ENCODE measurements at regions of chr14 and their contacts with region 1.

Region 1: DNA sequence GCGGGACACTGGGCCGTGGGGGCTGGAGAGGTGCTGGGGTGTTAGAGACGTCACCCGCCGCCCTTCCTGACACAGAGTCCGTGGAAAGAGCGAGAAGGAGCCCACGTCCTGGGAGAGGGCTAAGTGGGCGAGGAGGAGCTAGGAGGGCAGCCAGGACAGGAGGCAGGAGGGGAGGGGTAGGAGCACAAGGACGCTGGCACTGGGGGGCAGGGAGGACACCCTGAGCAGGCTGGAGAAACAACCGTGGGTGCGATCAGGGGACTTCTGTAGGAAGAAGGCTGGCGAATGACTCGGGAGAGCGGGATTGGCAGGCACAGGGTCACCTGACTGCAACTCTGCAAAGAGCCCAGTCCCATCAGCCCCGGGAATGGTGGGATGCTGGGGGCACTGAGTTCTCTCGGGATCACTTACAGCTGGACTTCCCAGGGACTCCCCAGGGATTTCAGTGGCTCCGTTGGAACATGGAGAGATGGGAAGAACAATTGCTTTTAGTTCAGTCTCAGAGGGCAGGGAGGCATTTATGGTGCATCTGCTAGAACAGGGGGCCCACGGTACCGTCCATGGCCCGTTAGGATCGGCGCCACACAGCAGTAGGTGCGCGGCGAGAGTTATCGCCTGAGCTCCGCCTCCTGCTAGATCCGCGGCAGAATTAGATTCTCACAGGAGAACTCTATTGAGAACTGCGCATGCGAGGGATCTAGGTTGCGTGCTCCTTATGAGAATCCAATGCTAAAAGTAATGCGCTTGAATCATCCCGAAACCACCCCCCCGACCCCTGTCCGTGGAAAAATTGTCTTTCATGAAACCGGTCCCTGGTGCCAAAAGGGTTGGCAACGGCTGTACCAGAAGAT is 24.3 kb downstream of the UBR7 start:
- DNase-seq: no peak
- H3K4me3 Mint-ChIP-seq: peak overlapping the region; percentile 67
- H3K27ac Mint-ChIP-seq: no peak overlapping the region
- H3K4me1 Mint-ChIP-seq: peaks cover 15% of the 10 kb centered on the region
- H3K27me3 Mint-ChIP-seq: peaks cover 9% of the 10 kb centered on the region

Region 2: GRCh38 chr14:93245764-93246420 is 14.5 kb after region 1 on chr14:
- CTCF ChIA-PET with region 1: no interaction called
- intact Hi-C with region 1: no loop called
- DNase-seq: no peak
- H3K4me3 Mint-ChIP-seq: no peak overlapping the region
- H3K27ac Mint-ChIP-seq: no peak overlapping the region
- H3K4me1 Mint-ChIP-seq: no peaks in the 10 kb centered on the region
- H3K27me3 Mint-ChIP-seq: no peaks in the 10 kb centered on the region

Region 3: DNA sequence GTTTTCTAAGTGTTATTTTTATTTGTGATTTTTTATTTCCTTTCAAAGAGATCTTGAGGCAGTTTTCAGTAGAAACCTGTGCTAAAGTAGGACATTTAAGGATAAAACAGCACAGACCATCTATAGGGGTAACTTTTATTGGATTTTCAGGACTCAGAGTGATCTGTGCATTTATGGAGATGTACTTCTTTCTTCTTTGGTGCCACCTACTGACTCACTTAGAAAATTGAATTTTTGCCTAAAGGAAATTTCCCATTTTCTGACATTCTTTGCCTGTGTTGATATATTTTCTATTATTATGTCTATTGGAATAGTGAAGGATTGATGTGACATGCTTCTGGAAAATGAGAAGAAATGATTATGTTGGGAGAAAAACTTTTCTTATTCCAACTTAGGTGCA is 312.4 kb after region 1 on chr14:
- CTCF ChIA-PET with region 1: no interaction called
- intact Hi-C with region 1: loop called (anchors 2 kb)
- DNase-seq: no peak
- H3K4me3 Mint-ChIP-seq: no peak overlapping the region
- H3K27ac Mint-ChIP-seq: no peak overlapping the region
- H3K4me1 Mint-ChIP-seq: no peaks in the 10 kb centered on the region
- H3K27me3 Mint-ChIP-seq: peaks cover 15% of the 10 kb centered on the region

Region 4: DNA sequence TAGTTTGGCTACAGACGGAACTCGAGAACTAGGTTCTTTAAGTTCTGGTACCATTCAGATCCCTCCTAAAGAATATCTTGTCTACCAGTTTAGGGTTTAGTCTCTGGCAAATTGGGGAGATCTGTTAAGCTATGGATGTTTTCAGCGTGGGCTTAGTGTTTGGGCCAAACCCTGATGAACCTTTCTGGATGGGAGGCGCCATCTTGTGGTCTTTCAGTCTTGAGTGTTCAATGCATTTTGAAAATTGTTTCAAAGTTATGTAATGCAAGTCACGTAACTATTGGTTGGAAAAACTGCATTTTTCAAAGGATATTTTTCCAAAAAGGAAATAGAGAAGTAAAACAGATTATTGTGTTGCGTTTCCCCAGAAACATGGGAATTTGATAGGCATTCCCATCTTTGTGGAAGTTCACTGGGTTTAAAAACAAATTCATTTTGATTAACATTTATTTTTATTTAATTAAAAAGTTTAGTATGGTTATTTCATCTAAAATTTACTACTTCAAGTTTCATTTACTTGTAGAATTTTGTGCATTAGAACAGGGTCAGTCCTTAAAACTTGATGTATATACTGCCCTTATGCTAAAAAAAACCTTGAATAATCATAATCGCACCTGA is 387.9 kb after region 1 on chr14:
- CTCF ChIA-PET with region 1: no interaction called
- intact Hi-C with region 1: loop called (anchors 2 kb)
- DNase-seq: peak; percentile 63
- H3K4me3 Mint-ChIP-seq: no peak overlapping the region
- H3K27ac Mint-ChIP-seq: no peak overlapping the region
- H3K4me1 Mint-ChIP-seq: no peaks in the 10 kb centered on the region
- H3K27me3 Mint-ChIP-seq: peaks cover 2% of the 10 kb centered on the region

Measured in activated naive CD4-positive, alpha-beta T cell treated with anti-CD3 and anti-CD28 coated beads for 36 hours (primary cell).